CD8-positive, alpha-beta T cell (primary cell): ENCODE measurements at regions of chr5 and their contacts with region 1.

Region 1: GRCh38 chr5:176458904-176459561 is 10.8 kb downstream of the FAF2 start:
- DNase-seq: no peak
- ATAC-seq: no peak
- H3K4me3 ChIP-seq: no peak overlapping the region
- H3K4me3 Mint-ChIP-seq: no peak overlapping the region
- H3K27ac ChIP-seq: no peak overlapping the region
- H3K27ac Mint-ChIP-seq: no peak overlapping the region
- H3K4me1 ChIP-seq: no peaks in the 10 kb centered on the region
- H3K4me1 Mint-ChIP-seq: peaks cover 55% of the 10 kb centered on the region
- H3K27me3 ChIP-seq: no peaks in the 10 kb centered on the region
- H3K27me3 Mint-ChIP-seq: no peaks in the 10 kb centered on the region
- CTCF ChIP-seq: no peak

Region 2: GRCh38 chr5:176473335-176474006 is 14.4 kb after region 1 on chr5:
- CTCF ChIA-PET with region 1: no interaction called
- POLR2A ChIA-PET with region 1: no interaction called
- intact Hi-C with region 1: loop called in 1 of 2 experiments (anchors 2 kb)
- DNase-seq: no peak
- ATAC-seq: no peak
- H3K4me3 ChIP-seq: no peak overlapping the region
- H3K4me3 Mint-ChIP-seq: no peak overlapping the region
- H3K27ac ChIP-seq: no peak overlapping the region
- H3K27ac Mint-ChIP-seq: no peak overlapping the region
- H3K4me1 ChIP-seq: no peaks in the 10 kb centered on the region
- H3K4me1 Mint-ChIP-seq: peaks cover 20% of the 10 kb centered on the region
- H3K27me3 ChIP-seq: no peaks in the 10 kb centered on the region
- H3K27me3 Mint-ChIP-seq: no peaks in the 10 kb centered on the region
- CTCF ChIP-seq: no peak